ENCODE measurements at regions of chr2 and their contacts with region 1.

Region 1: GRCh38 chr2:207473049-207473930 is 56.5 kb upstream of the CREB1 start:
- DNase-seq: peak in 1 of 4 experiments; percentile 57
- ATAC-seq: peak; percentile 84
- H3K4me3 ChIP-seq: no peak overlapping the region
- H3K27ac ChIP-seq: no peak overlapping the region
- H3K4me1 ChIP-seq: no peaks in the 10 kb centered on the region; a peak in 1 of 5 replicates
- H3K27me3 ChIP-seq: no peaks in the 10 kb centered on the region
- CTCF ChIP-seq: peak; percentile 50 to 78 (median 52)
- EP300 ChIP-seq: no peak
- POLR2A ChIP-seq: no peak
- RAD21 ChIP-seq: peak; percentile 78 to 82

Region 2: DNA sequence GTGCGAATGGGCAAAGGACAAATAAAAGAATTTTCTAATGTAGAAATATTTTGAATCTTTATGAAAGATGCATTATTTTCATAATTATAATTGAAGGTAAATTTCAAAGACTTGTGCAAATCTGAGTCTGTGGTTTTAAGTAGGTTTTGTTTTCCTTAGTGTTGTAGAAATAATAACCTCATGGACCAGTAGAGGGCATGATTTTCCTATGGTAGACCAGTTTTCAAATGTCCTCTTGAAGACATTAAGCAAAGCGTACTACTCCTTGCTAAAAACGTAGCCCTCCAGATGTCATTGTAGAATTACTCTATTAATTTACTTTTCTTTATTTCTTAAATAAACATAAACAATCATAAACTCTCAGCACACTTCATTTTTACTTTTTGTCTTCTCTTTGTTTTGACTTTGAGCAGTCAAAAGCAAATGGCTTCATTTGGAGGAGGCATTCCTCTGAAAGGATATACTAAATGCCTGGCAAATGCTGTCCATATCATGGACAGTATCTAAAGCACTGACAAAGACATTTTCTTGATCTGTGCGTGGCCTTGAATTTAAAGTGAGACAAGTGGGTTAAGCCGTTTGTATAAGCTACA is 916.8 kb before region 1 on chr2:
- CTCF ChIA-PET with region 1: no interaction called
- POLR2A ChIA-PET with region 1: no interaction called
- in situ Hi-C with region 1: loop called (anchors 25 kb)
- intact Hi-C with region 1: loop called (anchors 10 kb)
- DNase-seq: peak; percentile 12 to 33 (median 18)
- ATAC-seq: peak; percentile 71
- H3K4me3 ChIP-seq: no peak overlapping the region
- H3K27ac ChIP-seq: no peak overlapping the region
- H3K4me1 ChIP-seq: no peaks in the 10 kb centered on the region
- H3K27me3 ChIP-seq: no peaks in the 10 kb centered on the region
- CTCF ChIP-seq: peak; percentile 29 to 59 (median 31); a peak in 3 of 6 replicates
- EP300 ChIP-seq: no peak
- POLR2A ChIP-seq: no peak
- RAD21 ChIP-seq: peak in 1 of 2 experiments; percentile 50; a peak in 3 of 4 replicates

Region 3: GRCh38 chr2:206800506-206801417 is 672.5 kb before region 1 on chr2:
- CTCF ChIA-PET with region 1: interaction called, 16 read pairs
- POLR2A ChIA-PET with region 1: no interaction called
- in situ Hi-C with region 1: loop called (anchors 10 kb)
- intact Hi-C with region 1: loop called (anchors 1 kb)
- DNase-seq: peak; percentile 26 to 61 (median 28)
- ATAC-seq: peak; percentile 80
- H3K4me3 ChIP-seq: no peak overlapping the region
- H3K27ac ChIP-seq: no peak overlapping the region
- H3K4me1 ChIP-seq: no peaks in the 10 kb centered on the region
- H3K27me3 ChIP-seq: no peaks in the 10 kb centered on the region
- CTCF ChIP-seq: peak; percentile 51 to 72 (median 57)
- EP300 ChIP-seq: no peak
- POLR2A ChIP-seq: no peak
- RAD21 ChIP-seq: peak; percentile 66 to 67

Region 4: DNA sequence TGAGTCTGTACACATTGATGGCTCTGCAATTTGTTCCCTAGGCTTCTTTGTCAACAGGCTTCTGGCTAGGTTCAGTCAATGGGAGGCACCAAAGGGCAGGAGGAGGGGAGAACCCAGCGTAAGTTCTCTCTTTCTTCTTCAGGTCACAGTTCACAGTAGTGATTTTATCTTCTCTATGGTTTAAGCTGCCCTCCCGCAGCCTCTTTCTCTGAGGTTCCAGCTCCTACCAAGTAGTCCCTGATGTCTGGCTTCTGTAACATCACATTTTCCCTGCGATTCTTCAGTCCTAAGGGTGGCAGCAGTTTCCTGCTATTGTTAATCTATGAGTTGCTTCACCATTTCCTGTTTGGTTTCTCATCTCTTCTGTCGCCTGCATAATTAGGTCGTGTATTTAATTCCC is 426.6 kb before region 1 on chr2:
- CTCF ChIA-PET with region 1: no interaction called
- POLR2A ChIA-PET with region 1: no interaction called
- in situ Hi-C with region 1: no loop called
- intact Hi-C with region 1: loop called (anchors 10 kb)
- DNase-seq: no peak
- ATAC-seq: no peak
- H3K4me3 ChIP-seq: no peak overlapping the region
- H3K27ac ChIP-seq: no peak overlapping the region
- H3K4me1 ChIP-seq: no peaks in the 10 kb centered on the region
- H3K27me3 ChIP-seq: no peaks in the 10 kb centered on the region; a peak in 1 of 5 replicates
- CTCF ChIP-seq: no peak
- EP300 ChIP-seq: no peak
- POLR2A ChIP-seq: no peak
- RAD21 ChIP-seq: no peak

Region 5: DNA sequence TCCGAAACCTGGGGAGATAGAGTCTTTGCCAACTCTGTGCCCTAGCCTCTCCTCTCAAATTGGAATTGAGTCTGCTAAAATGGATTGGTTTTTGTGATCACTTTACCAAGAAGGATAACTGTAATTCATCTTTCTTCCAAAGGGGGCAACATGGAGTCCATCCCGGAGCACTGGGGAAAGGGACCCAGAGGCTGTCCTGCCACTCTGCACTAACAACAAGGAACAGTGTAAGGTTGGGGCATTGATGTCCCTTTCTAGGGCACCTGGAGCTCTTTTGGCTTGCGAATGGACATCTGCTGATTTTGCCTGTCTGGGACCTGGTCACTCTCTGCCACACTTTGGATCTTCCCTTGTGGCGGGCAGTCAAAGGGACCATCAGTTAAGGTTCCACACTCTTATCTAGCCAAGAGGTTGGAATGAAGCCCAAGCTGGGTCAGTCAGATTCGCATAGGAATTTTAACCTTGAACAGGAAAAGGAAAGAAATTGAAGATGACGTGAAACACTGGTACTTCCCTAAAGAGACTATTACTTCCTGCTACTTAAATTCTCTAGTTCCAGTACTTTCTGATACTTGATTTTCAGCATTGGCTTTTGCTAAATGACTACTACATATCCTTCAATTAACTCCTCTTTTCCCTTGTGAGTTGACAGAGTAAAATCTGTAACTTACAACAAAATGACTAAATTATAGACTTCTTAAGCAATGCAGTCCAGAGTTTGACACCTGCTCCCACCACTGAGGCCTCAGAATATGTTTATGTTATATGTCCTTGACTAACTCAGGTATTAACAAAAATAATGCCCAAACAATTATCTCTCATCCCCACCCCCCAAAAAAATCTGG is 242.8 kb before region 1 on chr2:
- CTCF ChIA-PET with region 1: no interaction called
- POLR2A ChIA-PET with region 1: no interaction called
- in situ Hi-C with region 1: no loop called
- intact Hi-C with region 1: loop called (anchors 10 kb)
- DNase-seq: peak; percentile 55 to 62 (median 58)
- ATAC-seq: peak; percentile 91
- H3K4me3 ChIP-seq: no peak overlapping the region
- H3K27ac ChIP-seq: no peak overlapping the region
- H3K4me1 ChIP-seq: peaks cover 0 to 22% of the 10 kb centered on the region in 2 experiments; a peak in 3 of 5 replicates
- H3K27me3 ChIP-seq: no peaks in the 10 kb centered on the region
- CTCF ChIP-seq: peak; percentile 50 to 77 (median 52)
- EP300 ChIP-seq: no peak
- POLR2A ChIP-seq: no peak
- RAD21 ChIP-seq: peak; percentile 34 to 47

Region 6: GRCh38 chr2:207341804-207342203 is 131.5 kb before region 1 on chr2:
- CTCF ChIA-PET with region 1: interaction called, 5 read pairs
- POLR2A ChIA-PET with region 1: no interaction called
- in situ Hi-C with region 1: no loop called
- intact Hi-C with region 1: loop called (anchors 1 kb)
- DNase-seq: peak in 1 of 4 experiments; percentile 14
- ATAC-seq: peak; percentile 64; the same call in 1 of the 3 replicates
- H3K4me3 ChIP-seq: no peak overlapping the region
- H3K27ac ChIP-seq: no peak overlapping the region
- H3K4me1 ChIP-seq: no peaks in the 10 kb centered on the region; a peak in 2 of 5 replicates
- H3K27me3 ChIP-seq: no peaks in the 10 kb centered on the region
- CTCF ChIP-seq: peak in 1 of 3 experiments; percentile 38; a peak in 2 of 6 replicates
- EP300 ChIP-seq: no peak
- POLR2A ChIP-seq: no peak
- RAD21 ChIP-seq: peak in 1 of 2 experiments; percentile 66; a peak in 3 of 4 replicates

Region 7: DNA sequence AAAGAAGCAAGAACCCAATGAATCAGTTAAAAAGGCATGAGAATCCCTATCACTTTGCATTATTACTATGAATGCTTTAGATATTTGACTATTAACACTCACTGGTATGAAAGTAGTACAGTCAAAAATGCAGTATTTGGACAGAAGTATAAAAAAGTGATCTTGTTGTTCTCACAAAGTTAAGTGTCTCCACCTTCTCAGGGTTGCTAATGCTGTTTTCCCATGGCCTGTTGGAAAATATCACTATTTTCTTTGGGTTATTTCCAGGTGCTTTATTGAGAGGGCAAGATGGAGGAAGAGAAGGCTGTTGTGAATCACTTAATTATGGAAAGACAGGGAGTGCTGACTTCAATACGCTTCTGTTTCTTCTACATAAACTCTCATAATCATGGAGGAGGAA is 42.9 kb after region 1 on chr2:
- CTCF ChIA-PET with region 1: no interaction called
- POLR2A ChIA-PET with region 1: no interaction called
- in situ Hi-C with region 1: no loop called
- intact Hi-C with region 1: no loop called
- DNase-seq: no peak
- ATAC-seq: no peak
- H3K4me3 ChIP-seq: no peak overlapping the region
- H3K27ac ChIP-seq: no peak overlapping the region
- H3K4me1 ChIP-seq: peaks cover 0 to 9% of the 10 kb centered on the region in 2 experiments; a peak in 1 of 5 replicates
- H3K27me3 ChIP-seq: no peaks in the 10 kb centered on the region
- CTCF ChIP-seq: no peak
- EP300 ChIP-seq: no peak
- POLR2A ChIP-seq: no peak
- RAD21 ChIP-seq: no peak

Measured in K562 (cell line).